Motor neuron (in vitro differentiated cells): ENCODE measurements at regions of chr22 and their contacts with region 1.

Region 1: GRCh38 chr22:36977947-36978660 is 41.1 kb downstream of the TST start:
- ATAC-seq: peak; percentile 81 to 94 (median 86)
- H3K4me3 ChIP-seq: peak overlapping the region; percentile 4 to 14 (median 4)
- H3K27ac ChIP-seq: no peak overlapping the region
- H3K4me1 ChIP-seq: peaks cover 0 to 4% of the 10 kb centered on the region in 2 donors

Region 2: DNA sequence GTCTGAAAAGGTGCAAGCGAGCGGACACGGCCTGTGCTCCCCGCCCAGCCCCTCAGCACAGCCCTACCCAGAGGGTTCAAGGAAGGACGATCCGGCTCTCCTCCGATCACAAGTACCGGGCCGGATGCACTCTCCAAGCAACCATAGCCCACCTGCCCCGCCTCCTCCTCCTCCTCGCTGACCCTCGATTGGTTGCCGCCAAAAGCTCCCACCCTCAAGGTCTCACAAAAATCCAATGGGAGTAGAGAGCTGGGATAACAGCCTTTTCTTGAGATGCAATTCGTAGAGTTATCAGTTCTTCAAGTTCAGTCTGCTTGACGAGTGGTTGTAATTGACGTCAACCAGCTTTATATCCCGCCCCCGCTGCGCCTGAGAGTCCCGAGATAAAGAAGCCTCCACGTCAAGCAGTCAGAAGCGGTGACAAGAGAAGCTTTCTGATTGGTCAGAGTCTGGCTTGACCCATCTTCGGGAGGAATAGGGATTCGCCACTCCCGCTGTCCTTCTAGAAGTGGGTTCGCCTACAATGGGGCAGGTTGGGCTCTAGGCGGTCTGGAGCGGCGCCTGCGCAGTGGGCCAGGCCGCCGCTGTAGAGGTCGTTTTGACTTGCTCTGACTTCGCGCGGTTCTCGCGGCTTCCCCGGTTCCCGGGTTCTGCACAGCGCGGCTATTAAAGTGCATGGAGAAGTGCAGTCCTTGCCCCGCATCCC is 202.0 kb before region 1 on chr22 and contains the start of gene IFT27:
- in situ Hi-C with region 1: loop called in 2 of 9 experiments (anchors 25 kb)
- ATAC-seq: peak; percentile 92 to 95 (median 94)
- H3K4me3 ChIP-seq: peak within 1 kb of the TSS; percentile 54 to 81 (median 67)
- H3K27ac ChIP-seq: peak within 1 kb of the TSS; percentile 78 to 87
- H3K4me1 ChIP-seq: peaks cover 7 to 13% of the 10 kb centered on the region in 2 donors
- total RNA-seq, gene IFT27: 21.1 to 100 (median 55.7) TPM

Region 3: GRCh38 chr22:36828815-36829214 is 149.3 kb before region 1 on chr22:
- in situ Hi-C with region 1: no loop called
- ATAC-seq: no peak
- H3K4me3 ChIP-seq: no peak overlapping the region
- H3K27ac ChIP-seq: no peak overlapping the region
- H3K4me1 ChIP-seq: no peaks in the 10 kb centered on the region

Region 4: GRCh38 chr22:36873680-36874537 is 104.2 kb before region 1 on chr22:
- in situ Hi-C with region 1: loop called in 1 of 9 experiments (anchors 10 kb)
- ATAC-seq: peak in 4 of 8 experiments; percentile 54 to 99 (median 94)
- H3K4me3 ChIP-seq: no peak overlapping the region
- H3K27ac ChIP-seq: no peak overlapping the region
- H3K4me1 ChIP-seq: no peaks in the 10 kb centered on the region

Region 5: DNA sequence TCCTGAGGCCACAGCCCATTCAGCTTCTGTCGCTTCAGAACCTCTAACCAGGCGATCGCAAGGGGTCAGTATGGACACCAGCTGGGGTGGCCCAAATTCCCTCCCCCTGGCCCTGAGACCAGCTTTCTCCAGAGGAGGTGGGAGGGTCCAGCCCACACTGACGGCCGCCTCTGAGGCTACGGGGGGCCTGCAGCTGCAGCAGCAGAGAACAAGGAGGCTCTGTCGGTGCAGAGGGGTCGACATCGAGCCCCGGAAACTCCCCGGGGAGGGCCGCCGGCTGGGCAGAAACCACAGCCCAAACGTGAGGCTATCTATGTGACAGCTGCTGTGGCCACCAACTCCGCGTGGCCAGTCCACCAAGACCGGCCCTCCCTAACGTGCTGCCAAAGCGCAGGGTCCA is 408.3 kb after region 1 on chr22:
- in situ Hi-C with region 1: no loop called
- ATAC-seq: peak in 3 of 8 experiments; percentile 11 to 17 (median 15)
- H3K4me3 ChIP-seq: no peak overlapping the region
- H3K27ac ChIP-seq: peak overlapping the region in 1 of 2 donors; percentile 22
- H3K4me1 ChIP-seq: peaks cover 16 to 32% of the 10 kb centered on the region in 2 donors